ENCODE measurements at regions of chr6 and their contacts with region 1.

Region 1: GRCh38 chr6:134814086-134814709 is 135.7 kb downstream of the ALDH8A1 start:
- DNase-seq: no peak
- ATAC-seq: no peak
- H3K4me3 ChIP-seq: no peak overlapping the region
- H3K27ac ChIP-seq: no peak overlapping the region
- H3K4me1 ChIP-seq: no peaks in the 10 kb centered on the region
- H3K27me3 ChIP-seq: no peaks in the 10 kb centered on the region
- CTCF ChIP-seq: no peak

Region 2: GRCh38 chr6:134577998-134578397 is 236.2 kb before region 1 on chr6:
- intact Hi-C with region 1: no loop called
- DNase-seq: no peak
- ATAC-seq: no peak
- H3K4me3 ChIP-seq: no peak overlapping the region
- H3K27ac ChIP-seq: no peak overlapping the region
- H3K4me1 ChIP-seq: no peaks in the 10 kb centered on the region
- H3K27me3 ChIP-seq: no peaks in the 10 kb centered on the region
- CTCF ChIP-seq: no peak

Region 3: GRCh38 chr6:134741200-134741536 is 73.0 kb before region 1 on chr6:
- intact Hi-C with region 1: loop called in 1 of 2 experiments (anchors 2 kb)
- DNase-seq: no peak
- ATAC-seq: peak; percentile 42 to 85 (median 66)
- H3K4me3 ChIP-seq: peak overlapping the region; percentile 19
- H3K27ac ChIP-seq: no peak overlapping the region
- H3K4me1 ChIP-seq: peaks cover 8% of the 10 kb centered on the region
- H3K27me3 ChIP-seq: no peaks in the 10 kb centered on the region
- CTCF ChIP-seq: peak; percentile 32

Region 4: DNA sequence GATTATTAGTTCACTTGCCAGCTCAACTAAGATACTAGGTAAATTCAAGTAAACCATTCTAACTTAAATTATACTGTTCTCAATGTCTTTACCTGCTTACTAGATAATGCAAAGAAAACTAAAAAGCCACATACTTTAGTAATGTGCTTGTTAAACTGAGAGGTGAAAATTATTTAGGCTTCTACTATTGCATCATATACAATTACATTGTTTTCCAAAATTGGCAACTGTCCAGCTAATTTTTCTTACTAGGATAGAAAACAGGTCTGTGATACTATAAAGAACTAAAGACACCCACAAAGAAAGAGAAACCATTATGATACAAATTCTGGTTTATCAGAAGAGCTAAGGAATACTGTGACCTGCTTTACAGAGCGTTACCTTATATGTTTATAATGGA is 181.3 kb after region 1 on chr6:
- intact Hi-C with region 1: no loop called
- DNase-seq: no peak
- ATAC-seq: no peak
- H3K4me3 ChIP-seq: no peak overlapping the region
- H3K27ac ChIP-seq: no peak overlapping the region
- H3K4me1 ChIP-seq: no peaks in the 10 kb centered on the region
- H3K27me3 ChIP-seq: no peaks in the 10 kb centered on the region
- CTCF ChIP-seq: no peak